ENCODE measurements at regions of chr16 and their contacts with region 1.

Region 1: DNA sequence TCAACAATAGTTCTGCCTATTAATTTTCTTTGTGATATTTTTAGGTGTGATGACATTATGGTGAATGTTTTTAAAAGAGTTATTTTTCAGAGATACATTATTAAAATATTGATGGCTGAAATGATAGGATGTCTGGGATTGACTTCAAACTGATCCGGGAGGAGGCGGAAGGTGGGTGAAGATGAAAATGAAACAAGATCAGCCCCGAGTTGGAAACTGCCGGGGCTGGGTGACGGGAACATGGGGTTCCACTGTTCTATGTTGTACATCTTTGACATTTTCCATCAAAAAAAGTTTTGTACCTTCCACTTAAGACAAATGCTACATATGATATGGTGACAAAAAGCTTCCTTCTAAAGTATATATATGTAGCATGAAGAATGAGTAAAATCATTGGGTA is 336.9 kb downstream of the XYLT1 start:
- DNase-seq: no peak
- H3K4me3 ChIP-seq: no peak overlapping the region
- H3K27ac ChIP-seq: no peak overlapping the region
- H3K4me1 ChIP-seq: no peaks in the 10 kb centered on the region
- H3K27me3 ChIP-seq: no peaks in the 10 kb centered on the region
- CTCF ChIP-seq: no peak
- POLR2A ChIP-seq: no peak

Region 2: GRCh38 chr16:16915771-16916170 is 218.1 kb before region 1 on chr16:
- intact Hi-C with region 1: no loop called
- DNase-seq: no peak
- H3K4me3 ChIP-seq: no peak overlapping the region
- H3K27ac ChIP-seq: no peak overlapping the region
- H3K4me1 ChIP-seq: peaks cover 7% of the 10 kb centered on the region
- H3K27me3 ChIP-seq: no peaks in the 10 kb centered on the region
- CTCF ChIP-seq: no peak
- POLR2A ChIP-seq: no peak

Region 3: GRCh38 chr16:17076092-17076754 is 57.6 kb before region 1 on chr16:
- intact Hi-C with region 1: loop called (anchors 2 kb)
- DNase-seq: no peak
- H3K4me3 ChIP-seq: no peak overlapping the region
- H3K27ac ChIP-seq: no peak overlapping the region
- H3K4me1 ChIP-seq: peaks cover under 1% of the 10 kb centered on the region
- H3K27me3 ChIP-seq: no peaks in the 10 kb centered on the region
- CTCF ChIP-seq: no peak
- POLR2A ChIP-seq: no peak